ENCODE measurements at regions of chr1 and their contacts with region 1.

Region 1: DNA sequence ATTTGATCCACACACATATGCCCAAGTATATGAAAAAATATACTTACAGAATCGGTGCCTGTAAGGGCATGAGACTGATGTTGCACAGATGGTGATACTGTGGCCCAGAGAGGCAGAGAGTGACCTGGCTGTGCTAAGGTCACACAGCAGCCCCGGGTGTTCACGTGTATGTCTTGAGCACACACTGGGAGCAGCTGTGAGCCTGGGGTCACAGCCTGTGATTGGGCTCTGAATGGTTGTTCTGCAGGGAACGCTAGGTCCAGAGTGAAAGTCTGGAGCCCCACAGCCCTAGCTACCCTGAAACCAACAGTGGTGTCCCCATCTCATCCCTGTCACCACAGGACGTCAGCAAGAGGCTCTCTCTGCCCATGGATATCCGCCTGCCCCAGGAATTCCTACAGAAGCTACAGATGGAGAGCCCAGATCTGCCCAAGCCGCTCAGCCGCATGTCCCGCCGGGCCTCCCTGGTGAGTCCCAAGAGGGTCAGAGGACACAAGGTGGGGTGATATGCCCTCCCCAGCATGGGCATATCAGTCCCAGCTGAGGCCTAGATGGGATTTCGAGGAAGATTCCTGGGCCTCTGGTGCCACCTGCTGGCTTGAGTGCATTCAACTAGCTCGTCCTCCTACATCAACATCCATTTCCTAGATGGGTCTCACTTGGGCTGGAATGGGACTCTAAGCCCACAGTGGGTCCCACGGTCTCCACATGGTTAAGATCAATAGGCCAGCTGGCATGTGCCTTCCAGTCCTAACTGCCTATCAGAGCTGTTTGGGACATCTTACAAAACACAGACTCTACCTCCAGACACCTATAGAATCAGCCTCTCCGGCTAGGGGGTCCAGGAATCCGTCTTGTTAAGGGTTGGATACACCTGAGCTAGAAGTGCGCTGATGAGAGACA is 19.7 kb downstream of the CDK18 start:
- DNase-seq: peak; percentile 67
- ATAC-seq: peak; percentile 69
- H3K4me3 Mint-ChIP-seq: no peak overlapping the region
- H3K27ac Mint-ChIP-seq: no peak overlapping the region
- H3K4me1 Mint-ChIP-seq: no peaks in the 10 kb centered on the region
- H3K27me3 Mint-ChIP-seq: peaks cover 6% of the 10 kb centered on the region
- CTCF ChIP-seq: no peak

Region 2: GRCh38 chr1:205335643-205336091 is 188.5 kb before region 1 on chr1:
- CTCF ChIA-PET with region 1: interaction called, 100 read pairs
- POLR2A ChIA-PET with region 1: no interaction called
- intact Hi-C with region 1: loop called (anchors 1 kb)
- DNase-seq: peak; percentile 70
- ATAC-seq: peak; percentile 84
- H3K4me3 Mint-ChIP-seq: no peak overlapping the region
- H3K27ac Mint-ChIP-seq: no peak overlapping the region
- H3K4me1 Mint-ChIP-seq: peaks cover 6% of the 10 kb centered on the region
- H3K27me3 Mint-ChIP-seq: no peaks in the 10 kb centered on the region
- CTCF ChIP-seq: peak; percentile 84

Region 3: GRCh38 chr1:205354259-205354904 is 169.8 kb before region 1 on chr1:
- CTCF ChIA-PET with region 1: interaction called, 53 read pairs
- POLR2A ChIA-PET with region 1: interaction called, 4 read pairs
- intact Hi-C with region 1: loop called (anchors 1 kb)
- DNase-seq: no peak
- ATAC-seq: peak; percentile 69
- H3K4me3 Mint-ChIP-seq: no peak overlapping the region
- H3K27ac Mint-ChIP-seq: no peak overlapping the region
- H3K4me1 Mint-ChIP-seq: peaks cover 28% of the 10 kb centered on the region
- H3K27me3 Mint-ChIP-seq: peaks cover 9% of the 10 kb centered on the region
- CTCF ChIP-seq: no peak

Region 4: GRCh38 chr1:205485338-205486228 is 38.6 kb before region 1 on chr1:
- CTCF ChIA-PET with region 1: interaction called, 196 read pairs
- POLR2A ChIA-PET with region 1: no interaction called
- intact Hi-C with region 1: loop called (anchors 1 kb)
- DNase-seq: peak; percentile 47
- ATAC-seq: peak; percentile 80
- H3K4me3 Mint-ChIP-seq: no peak overlapping the region
- H3K27ac Mint-ChIP-seq: no peak overlapping the region
- H3K4me1 Mint-ChIP-seq: peaks cover 29% of the 10 kb centered on the region
- H3K27me3 Mint-ChIP-seq: peaks cover 36% of the 10 kb centered on the region
- CTCF ChIP-seq: peak; percentile 73

Region 5: DNA sequence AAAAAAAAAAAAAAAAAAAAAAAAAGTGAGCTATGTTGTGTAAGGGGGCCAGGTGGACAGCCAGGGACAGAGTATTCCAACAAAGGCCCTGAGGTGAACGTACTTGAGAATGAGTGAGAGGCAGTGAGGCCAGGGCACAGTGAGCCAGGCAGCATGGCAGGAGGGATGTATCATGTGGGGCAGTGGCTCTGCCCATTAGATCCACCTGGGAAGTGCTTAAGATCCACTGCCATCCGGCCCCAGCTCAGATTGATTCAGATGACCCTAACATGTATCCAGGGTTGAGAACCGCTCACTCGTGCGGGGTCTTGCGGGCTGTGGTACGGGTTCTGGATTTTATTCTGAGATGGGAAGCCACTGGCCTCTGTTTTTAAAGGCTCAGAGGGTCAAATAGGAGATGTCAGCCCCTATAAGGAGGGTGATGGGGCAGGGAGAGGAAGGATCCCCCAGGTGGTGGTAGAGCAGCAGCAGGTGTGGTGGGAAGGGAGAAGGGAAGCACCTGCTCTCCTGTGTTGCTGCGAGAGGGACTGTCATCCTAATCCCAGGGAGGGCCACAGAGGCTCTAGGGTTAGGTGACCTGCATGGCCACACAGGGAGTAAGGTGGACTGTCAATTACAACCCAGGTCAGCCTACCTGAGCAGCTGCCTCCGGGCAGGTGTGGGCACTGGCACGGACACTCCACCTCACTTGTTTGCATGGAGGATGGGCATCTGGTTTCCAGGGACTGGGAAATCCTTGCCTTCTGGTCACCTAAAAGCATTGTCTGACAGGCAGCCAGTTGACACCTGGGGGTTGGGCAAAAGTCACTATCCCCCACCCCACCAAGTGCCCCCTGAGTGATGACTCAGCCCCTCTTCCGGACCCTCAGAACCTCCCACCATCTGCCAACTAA is 12.0 kb after region 1 on chr1:
- CTCF ChIA-PET with region 1: interaction called, 14 read pairs
- POLR2A ChIA-PET with region 1: no interaction called
- intact Hi-C with region 1: no loop called
- DNase-seq: peak; percentile 1
- ATAC-seq: no peak
- H3K4me3 Mint-ChIP-seq: no peak overlapping the region
- H3K27ac Mint-ChIP-seq: no peak overlapping the region
- H3K4me1 Mint-ChIP-seq: peaks cover 13% of the 10 kb centered on the region
- H3K27me3 Mint-ChIP-seq: peaks cover 3% of the 10 kb centered on the region
- CTCF ChIP-seq: no peak

Region 6: GRCh38 chr1:205578780-205579606 is 54.9 kb after region 1 on chr1:
- CTCF ChIA-PET with region 1: no interaction called
- POLR2A ChIA-PET with region 1: no interaction called
- intact Hi-C with region 1: no loop called
- DNase-seq: no peak
- ATAC-seq: no peak
- H3K4me3 Mint-ChIP-seq: no peak overlapping the region
- H3K27ac Mint-ChIP-seq: no peak overlapping the region
- H3K4me1 Mint-ChIP-seq: peaks cover 17% of the 10 kb centered on the region
- H3K27me3 Mint-ChIP-seq: peaks cover 5% of the 10 kb centered on the region
- CTCF ChIP-seq: no peak

Region 7: DNA sequence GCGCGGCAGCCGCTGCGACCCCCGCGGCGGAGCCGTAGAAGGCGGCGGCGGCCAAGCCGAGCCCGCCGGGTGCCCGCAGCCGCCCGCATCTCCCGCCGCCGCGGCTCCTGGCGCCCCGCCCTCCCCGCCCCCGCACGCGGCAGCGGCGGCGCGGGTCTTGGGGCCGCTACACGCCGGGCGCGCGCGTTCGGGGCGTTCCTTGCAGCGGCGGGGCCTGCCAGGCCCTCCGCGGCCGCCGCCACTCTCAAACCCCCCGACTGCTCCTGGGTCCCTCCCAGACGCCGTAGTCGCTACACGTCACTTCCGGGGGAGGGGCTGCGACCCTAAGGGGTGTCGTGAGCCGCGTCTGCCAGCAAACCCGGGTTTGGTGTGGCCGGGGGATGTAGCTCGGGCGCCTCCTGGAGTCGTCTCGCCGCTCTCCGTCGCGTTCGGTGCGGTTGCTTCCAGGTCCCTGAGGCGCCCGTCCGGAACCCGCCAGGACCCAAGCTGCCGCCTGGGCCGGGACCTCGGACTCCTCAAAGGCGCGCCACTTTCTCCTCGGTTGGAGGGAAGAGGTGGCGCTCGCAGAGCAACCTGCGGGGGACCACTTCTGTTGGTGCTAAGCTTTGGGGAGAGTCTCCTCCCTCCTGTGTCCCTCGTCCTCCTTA is 107.7 kb after region 1 on chr1 and contains the start of gene ELK4:
- CTCF ChIA-PET with region 1: interaction called, 19 read pairs
- POLR2A ChIA-PET with region 1: interaction called, 10 read pairs
- intact Hi-C with region 1: loop called (anchors 1 kb)
- DNase-seq: peak; percentile 99
- ATAC-seq: peak; percentile 83
- H3K4me3 Mint-ChIP-seq: peak within 1 kb of the TSS; percentile 96
- H3K27ac Mint-ChIP-seq: peak within 1 kb of the TSS; percentile 96
- H3K4me1 Mint-ChIP-seq: peaks cover 46% of the 10 kb centered on the region
- H3K27me3 Mint-ChIP-seq: no peaks in the 10 kb centered on the region
- CTCF ChIP-seq: no peak
- total RNA-seq, gene ELK4: 130 and 141 TPM in 2 replicates